Gastrocnemius medialis (tissue), 4 donors: ENCODE measurements at regions of chr15 and their contacts with region 1.

Region 1: DNA sequence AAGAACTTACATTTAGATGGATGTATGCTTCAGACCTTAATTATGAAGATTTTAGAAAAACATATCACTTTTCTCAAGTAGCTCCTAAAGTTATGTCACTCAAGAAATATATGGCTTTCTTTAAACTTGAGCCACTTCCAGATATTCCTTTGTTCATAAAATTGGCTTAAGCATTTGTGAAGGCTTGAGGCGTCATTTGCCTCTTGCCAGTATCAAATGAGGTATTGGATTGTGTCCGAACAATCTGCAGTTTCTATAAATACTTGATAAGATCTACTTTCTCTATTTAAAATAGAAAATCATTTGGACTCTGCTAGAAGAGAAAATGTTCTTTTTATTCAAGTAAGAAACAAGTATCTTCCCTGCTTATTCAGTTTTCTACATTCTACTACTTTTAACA is 102.6 kb downstream of the RSL24D1 start:
- DNase-seq: no peak
- ATAC-seq: no peak
- H3K4me3 ChIP-seq: no peak overlapping the region
- H3K27ac ChIP-seq: no peak overlapping the region
- H3K4me1 ChIP-seq: no peaks in the 10 kb centered on the region
- H3K27me3 ChIP-seq: no peaks in the 10 kb centered on the region
- CTCF ChIP-seq: no peak
- POLR2A ChIP-seq: no peak

Region 2: DNA sequence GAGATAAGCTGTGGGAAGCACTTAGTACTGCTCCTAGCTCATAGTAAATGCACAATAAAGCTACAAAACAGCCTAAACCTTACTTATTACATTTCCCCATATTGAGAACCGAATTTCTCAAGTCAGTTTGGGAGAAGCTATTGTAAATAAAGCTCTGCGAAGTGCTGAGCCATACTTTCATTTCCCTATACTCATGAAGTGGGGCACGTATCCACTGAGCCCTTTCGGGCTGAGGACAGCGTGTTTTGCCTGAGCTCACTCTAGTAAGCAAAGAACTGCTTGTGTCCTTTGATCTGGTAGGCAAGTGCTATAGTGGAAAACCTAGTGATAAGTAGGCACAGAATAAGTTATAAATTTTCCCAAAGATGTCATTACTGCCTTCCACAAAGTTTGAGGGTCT is 62.4 kb before region 1 on chr15:
- in situ Hi-C with region 1: loop called in 1 of 4 experiments (anchors 10 kb)
- intact Hi-C with region 1: no loop called
- DNase-seq: no peak
- ATAC-seq: no peak
- H3K4me3 ChIP-seq: no peak overlapping the region
- H3K27ac ChIP-seq: no peak overlapping the region
- H3K4me1 ChIP-seq: no peaks in the 10 kb centered on the region
- H3K27me3 ChIP-seq: no peaks in the 10 kb centered on the region
- CTCF ChIP-seq: no peak
- POLR2A ChIP-seq: no peak

Region 3: DNA sequence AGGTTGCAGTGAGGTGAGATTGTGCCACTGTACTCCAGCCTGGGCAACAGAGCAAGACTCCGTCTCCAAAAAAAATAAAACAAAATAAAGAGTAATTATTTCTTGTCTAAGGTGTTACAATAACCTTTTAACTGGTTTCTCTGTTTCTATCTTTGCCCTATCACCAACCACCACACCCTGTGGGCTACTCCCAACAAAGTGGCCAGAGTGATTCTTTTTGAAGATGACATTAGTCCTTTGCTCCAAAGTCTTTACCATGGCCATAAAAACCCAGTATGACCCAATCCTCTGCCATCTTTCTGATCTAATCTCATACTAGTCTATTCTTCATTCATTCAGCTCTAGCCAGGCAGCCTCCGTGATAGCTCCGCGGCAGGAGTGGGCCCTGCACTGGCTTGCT is 1086.7 kb after region 1 on chr15:
- in situ Hi-C with region 1: no loop called
- intact Hi-C with region 1: no loop called
- DNase-seq: no peak
- ATAC-seq: no peak
- H3K4me3 ChIP-seq: no peak overlapping the region
- H3K27ac ChIP-seq: no peak overlapping the region
- H3K4me1 ChIP-seq: peaks cover 15 to 19% of the 10 kb centered on the region in 2 donors
- H3K27me3 ChIP-seq: no peaks in the 10 kb centered on the region
- CTCF ChIP-seq: no peak
- POLR2A ChIP-seq: no peak